Endothelial cell of umbilical vein (primary cell): ENCODE measurements at regions of chr11 and their contacts with region 1.

Region 1: GRCh38 chr11:75280227-75280701 is 39.7 kb downstream of the TPBGL start:
- DNase-seq: peak; percentile 87
- H3K4me3 ChIP-seq: no peak overlapping the region
- H3K27ac ChIP-seq: peak overlapping the region; percentile 1
- H3K4me1 ChIP-seq: peaks cover 29% of the 10 kb centered on the region
- H3K27me3 ChIP-seq: no peaks in the 10 kb centered on the region
- CTCF ChIP-seq: peak; percentile 95 to 97
- POLR2A ChIP-seq: no peak

Region 2: DNA sequence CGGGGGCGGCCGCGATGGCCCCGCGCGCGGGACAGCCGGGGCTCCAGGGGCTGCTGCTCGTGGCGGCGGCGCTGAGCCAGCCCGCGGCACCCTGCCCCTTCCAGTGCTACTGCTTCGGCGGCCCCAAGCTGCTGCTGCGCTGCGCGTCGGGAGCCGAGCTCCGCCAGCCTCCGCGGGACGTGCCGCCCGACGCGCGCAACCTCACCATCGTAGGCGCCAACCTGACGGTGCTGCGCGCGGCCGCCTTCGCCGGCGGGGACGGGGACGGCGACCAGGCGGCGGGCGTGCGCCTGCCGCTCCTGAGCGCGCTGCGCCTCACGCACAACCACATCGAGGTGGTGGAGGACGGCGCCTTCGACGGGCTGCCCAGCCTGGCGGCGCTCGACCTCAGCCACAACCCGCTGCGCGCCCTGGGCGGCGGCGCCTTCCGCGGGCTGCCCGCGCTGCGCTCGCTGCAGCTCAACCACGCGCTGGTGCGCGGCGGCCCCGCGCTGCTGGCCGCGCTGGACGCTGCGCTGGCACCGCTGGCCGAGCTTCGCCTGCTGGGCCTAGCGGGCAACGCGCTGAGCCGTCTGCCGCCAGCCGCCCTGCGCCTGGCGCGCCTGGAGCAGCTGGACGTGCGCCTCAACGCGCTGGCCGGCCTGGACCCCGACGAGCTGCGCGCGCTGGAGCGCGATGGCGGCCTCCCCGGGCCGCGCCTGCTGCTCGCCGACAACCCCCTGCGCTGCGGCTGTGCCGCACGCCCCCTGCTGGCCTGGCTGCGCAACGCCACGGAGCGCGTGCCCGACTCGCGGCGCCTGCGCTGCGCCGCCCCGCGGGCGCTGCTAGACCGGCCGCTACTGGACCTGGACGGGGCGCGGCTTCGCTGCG is 39.0 kb before region 1 on chr11:
- CTCF ChIA-PET with region 1: interaction called, 13 read pairs
- POLR2A ChIA-PET with region 1: no interaction called
- dilution Hi-C with region 1: no loop called
- intact Hi-C with region 1: no loop called
- DNase-seq: peak; percentile 85
- H3K4me3 ChIP-seq: peak overlapping the region in 2 of 3 experiments; percentile 4 to 31
- H3K27ac ChIP-seq: no peak overlapping the region
- H3K4me1 ChIP-seq: peaks cover 7% of the 10 kb centered on the region
- H3K27me3 ChIP-seq: peaks cover 50 to 51% of the 10 kb centered on the region in 2 experiments
- CTCF ChIP-seq: peak; percentile 61 to 99
- POLR2A ChIP-seq: no peak

Region 3: GRCh38 chr11:75306529-75306928 is 26.3 kb after region 1 on chr11:
- CTCF ChIA-PET with region 1: interaction called, 10 read pairs
- POLR2A ChIA-PET with region 1: no interaction called
- dilution Hi-C with region 1: no loop called
- intact Hi-C with region 1: no loop called
- DNase-seq: peak; percentile 51
- H3K4me3 ChIP-seq: peak overlapping the region in 1 of 3 experiments; percentile 16
- H3K27ac ChIP-seq: peak overlapping the region; percentile 50
- H3K4me1 ChIP-seq: peaks cover 24% of the 10 kb centered on the region
- H3K27me3 ChIP-seq: no peaks in the 10 kb centered on the region
- CTCF ChIP-seq: no peak
- POLR2A ChIP-seq: no peak

Region 4: DNA sequence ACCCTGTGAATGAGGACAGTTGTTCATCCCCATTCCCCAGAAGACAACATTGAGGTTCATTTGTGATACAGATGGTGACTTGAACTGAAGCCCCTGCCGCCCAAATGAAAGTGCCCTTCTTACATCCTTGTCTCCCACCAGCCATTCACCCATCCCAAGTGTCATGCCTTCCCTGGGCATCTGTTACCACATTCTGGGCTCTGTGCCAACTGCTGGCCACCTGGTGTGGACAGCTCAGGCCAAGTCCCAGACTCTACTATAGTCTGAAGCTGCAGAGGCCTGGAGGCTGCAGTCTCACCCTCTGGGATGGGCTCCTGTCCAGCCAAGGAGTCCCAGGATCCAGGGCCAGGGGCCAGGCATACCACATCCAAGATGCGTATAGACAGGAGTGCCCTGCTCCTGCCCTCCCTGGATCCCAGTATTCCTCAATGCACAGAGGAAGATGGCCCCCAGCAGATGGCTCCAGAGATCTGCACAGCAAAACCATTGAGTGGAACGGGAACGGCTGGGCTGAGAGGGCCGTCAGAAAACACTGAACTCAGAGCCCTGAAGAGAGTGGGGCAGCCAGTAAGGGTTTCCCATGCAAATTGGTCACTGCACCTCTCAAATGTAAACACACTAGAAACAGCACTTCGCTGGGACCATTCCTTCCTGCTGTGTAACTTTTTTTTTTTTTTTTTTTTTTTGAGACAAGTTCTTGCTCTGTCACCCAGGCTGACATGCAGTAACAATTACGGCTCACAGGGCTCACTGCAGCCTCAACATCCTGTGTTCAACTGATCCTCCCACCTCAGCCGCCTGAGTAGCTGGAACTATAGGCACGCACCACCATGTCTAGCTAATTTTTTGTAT is 48.4 kb after region 1 on chr11:
- CTCF ChIA-PET with region 1: interaction called, 42 read pairs
- POLR2A ChIA-PET with region 1: no interaction called
- dilution Hi-C with region 1: no loop called
- intact Hi-C with region 1: loop called (anchors 1 kb)
- DNase-seq: peak; percentile 84
- H3K4me3 ChIP-seq: no peak overlapping the region
- H3K27ac ChIP-seq: no peak overlapping the region
- H3K4me1 ChIP-seq: peaks cover 33% of the 10 kb centered on the region
- H3K27me3 ChIP-seq: no peaks in the 10 kb centered on the region
- CTCF ChIP-seq: peak; percentile 51 to 61
- POLR2A ChIP-seq: no peak

Region 5: GRCh38 chr11:75351791-75352587 is 71.7 kb after region 1 on chr11:
- CTCF ChIA-PET with region 1: interaction called, 28 read pairs
- POLR2A ChIA-PET with region 1: no interaction called
- dilution Hi-C with region 1: no loop called
- intact Hi-C with region 1: loop called (anchors 1 kb)
- DNase-seq: no peak
- H3K4me3 ChIP-seq: peak overlapping the region in 2 of 3 experiments; percentile 33 to 85
- H3K27ac ChIP-seq: no peak overlapping the region
- H3K4me1 ChIP-seq: peaks cover 45% of the 10 kb centered on the region
- H3K27me3 ChIP-seq: no peaks in the 10 kb centered on the region
- CTCF ChIP-seq: no peak
- POLR2A ChIP-seq: peak; percentile 20

Region 6: DNA sequence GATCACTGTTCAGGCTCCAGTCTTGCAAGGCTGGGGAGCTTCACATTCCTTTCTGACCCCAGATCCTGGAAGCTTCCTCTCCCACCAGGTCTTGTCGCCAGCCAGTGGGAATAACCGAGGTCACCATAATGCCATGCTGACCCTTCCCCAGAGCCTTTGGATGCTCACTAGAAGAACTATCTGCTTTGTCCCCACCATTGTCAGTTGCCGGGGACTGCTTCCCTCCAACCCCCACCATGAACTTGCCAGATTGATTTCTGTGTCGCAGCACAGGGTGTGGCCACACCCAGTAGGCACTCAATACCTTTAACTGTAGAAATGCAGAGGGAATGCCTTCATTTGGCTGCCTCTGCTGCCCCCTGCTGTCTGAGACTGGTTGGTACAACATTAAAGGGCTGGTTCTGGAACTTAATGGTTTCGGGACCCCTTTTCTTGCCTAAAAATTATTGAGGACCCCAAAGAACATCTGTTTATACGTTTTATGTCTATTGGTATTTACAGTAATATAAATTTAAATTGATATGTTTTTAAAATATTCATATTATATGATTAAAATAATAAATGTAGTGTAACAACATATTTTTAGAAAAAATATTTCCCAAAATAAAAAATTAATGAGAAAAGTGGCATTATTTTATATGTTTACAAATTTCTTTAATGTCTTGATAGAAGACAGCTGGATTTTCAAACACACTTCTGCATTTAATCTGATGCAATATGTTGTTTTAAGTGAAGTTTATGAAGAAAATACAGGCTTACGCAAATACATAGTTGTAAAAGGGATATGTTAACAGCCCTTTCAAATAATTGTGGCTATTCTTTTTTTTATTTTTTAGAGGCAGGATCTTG is 252.2 kb after region 1 on chr11:
- CTCF ChIA-PET with region 1: interaction called, 4 read pairs
- POLR2A ChIA-PET with region 1: no interaction called
- dilution Hi-C with region 1: no loop called
- intact Hi-C with region 1: loop called (anchors 2 kb)
- DNase-seq: peak; percentile 76
- H3K4me3 ChIP-seq: no peak overlapping the region
- H3K27ac ChIP-seq: no peak overlapping the region
- H3K4me1 ChIP-seq: peaks cover 13% of the 10 kb centered on the region
- H3K27me3 ChIP-seq: no peaks in the 10 kb centered on the region
- CTCF ChIP-seq: peak; percentile 72 to 78
- POLR2A ChIP-seq: no peak